Aorta (tissue), 5 donors: ENCODE measurements at regions of chr2 and their contacts with region 1.

Region 1: GRCh38 chr2:175414882-175415487 is 233.5 kb upstream of the ATP5MC3 start:
- DNase-seq: peak; percentile 69 to 70
- ATAC-seq: no peak
- H3K4me3 ChIP-seq: no peak overlapping the region
- H3K27ac ChIP-seq: no peak overlapping the region
- H3K4me1 ChIP-seq: no peaks in the 10 kb centered on the region
- H3K27me3 ChIP-seq: no peaks in the 10 kb centered on the region

Region 2: DNA sequence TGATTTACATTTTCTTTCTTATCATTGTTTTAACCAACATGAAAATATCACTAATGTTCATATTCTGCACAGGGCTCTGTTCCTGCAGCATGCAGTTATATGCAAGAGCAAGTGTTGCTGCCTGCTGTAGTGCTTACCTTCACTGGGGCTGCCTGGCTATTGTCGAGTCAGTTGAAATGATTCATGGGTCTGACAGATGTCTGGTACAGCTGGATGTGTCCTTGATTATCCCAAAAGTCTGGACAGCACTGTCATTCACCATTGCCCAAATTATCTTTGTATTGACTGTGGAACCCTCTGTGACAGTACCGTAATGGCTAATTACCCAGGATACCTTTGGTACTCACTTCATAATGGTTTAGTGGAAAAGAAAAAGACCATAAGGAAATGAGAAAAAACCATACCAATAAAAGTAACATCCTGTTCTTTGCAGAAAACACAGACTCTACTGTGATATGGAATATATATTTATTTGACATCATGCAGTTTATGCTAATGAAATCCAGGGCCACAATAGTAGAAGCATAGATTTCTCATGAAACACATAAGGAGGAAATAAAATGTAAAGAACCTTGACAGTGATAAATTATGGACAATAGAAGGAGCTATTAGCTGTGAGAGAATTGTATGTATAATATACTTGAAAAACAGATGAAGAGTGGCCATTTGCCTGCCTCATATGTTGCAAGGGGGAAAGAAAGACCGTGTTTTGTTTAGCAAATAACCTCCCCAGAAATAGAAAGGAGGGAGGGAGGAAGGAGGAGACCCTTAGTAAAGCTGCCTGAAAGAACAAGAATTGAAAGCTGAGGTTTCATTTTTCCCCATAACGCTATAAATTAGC is 16.3 kb after region 1 on chr2:
- intact Hi-C with region 1: loop called in 1 of 2 experiments (anchors 1 kb)
- DNase-seq: no peak
- ATAC-seq: no peak
- H3K4me3 ChIP-seq: no peak overlapping the region
- H3K27ac ChIP-seq: no peak overlapping the region
- H3K4me1 ChIP-seq: no peaks in the 10 kb centered on the region
- H3K27me3 ChIP-seq: peaks cover 0 to 1% of the 10 kb centered on the region in 2 donors